HepG2 (cell line): ENCODE measurements at regions of chr12 and their contacts with region 1.

Region 1: GRCh38 chr12:56230432-56231183 is 757 bp downstream of the SLC39A5 start:
- DNase-seq: peak; percentile 93
- ATAC-seq: peak; percentile 96
- H3K4me3 ChIP-seq: peak overlapping the region; percentile 62 to 86 (median 78)
- H3K27ac ChIP-seq: peak overlapping the region; percentile 99
- H3K4me1 ChIP-seq: peaks cover 37% of the 10 kb centered on the region
- H3K27me3 ChIP-seq: no peaks in the 10 kb centered on the region
- CTCF ChIP-seq: no peak
- EP300 ChIP-seq: 0 out of 4 replicates have a peak, but pooled peaks of 1 of the 2 experiments have one; percentile 32
- POLR2A ChIP-seq: peak; percentile 71 to 85; a peak in 3 of 4 replicates
- RAD21 ChIP-seq: no peak

Region 2: GRCh38 chr12:56258057-56258819 is 27.6 kb after region 1 on chr12 and contains the start of gene ANKRD52:
- CTCF ChIA-PET with region 1: interaction called, 6 read pairs
- POLR2A ChIA-PET with region 1: interaction called, 12 read pairs
- in situ Hi-C with region 1: no loop called
- intact Hi-C with region 1: no loop called
- DNase-seq: peak; percentile 26
- ATAC-seq: peak; percentile 92
- H3K4me3 ChIP-seq: peak within 1 kb of the TSS; percentile 74 to 96 (median 88)
- H3K27ac ChIP-seq: peak within 1 kb of the TSS; percentile 45
- H3K4me1 ChIP-seq: peaks cover 28% of the 10 kb centered on the region
- H3K27me3 ChIP-seq: no peaks in the 10 kb centered on the region
- CTCF ChIP-seq: peak; percentile 61
- EP300 ChIP-seq: no peak
- POLR2A ChIP-seq: peak in 1 of 2 experiments; percentile 47; a peak in 2 of 4 replicates
- RAD21 ChIP-seq: peak; percentile 84
- total RNA-seq, gene ANKRD52: 7.8 and 22.0 TPM in 2 replicates